ENCODE measurements at regions of chr2 and their contacts with region 1.

Region 1: GRCh38 chr2:27086090-27086723 is 365 bp upstream of the KHK start:
- DNase-seq: peak; percentile 96
- ATAC-seq: peak; percentile 84
- H3K4me3 ChIP-seq: peak overlapping the region; percentile 86
- H3K27ac ChIP-seq: no peak overlapping the region
- H3K4me1 ChIP-seq: peaks cover 19% of the 10 kb centered on the region; the same call in 1 of the 2 replicates
- H3K27me3 ChIP-seq: no peaks in the 10 kb centered on the region
- CTCF ChIP-seq: peak; percentile 66

Region 2: GRCh38 chr2:26959331-26959730 is 126.9 kb before region 1 on chr2:
- CTCF ChIA-PET with region 1: interaction called, 4 read pairs
- POLR2A ChIA-PET with region 1: no interaction called
- intact Hi-C with region 1: loop called (anchors 1 kb)
- DNase-seq: no peak
- ATAC-seq: no peak
- H3K4me3 ChIP-seq: no peak overlapping the region
- H3K27ac ChIP-seq: no peak overlapping the region
- H3K4me1 ChIP-seq: no peaks in the 10 kb centered on the region
- H3K27me3 ChIP-seq: peaks cover 21% of the 10 kb centered on the region; the same call in 1 of the 2 replicates
- CTCF ChIP-seq: no peak

Region 3: DNA sequence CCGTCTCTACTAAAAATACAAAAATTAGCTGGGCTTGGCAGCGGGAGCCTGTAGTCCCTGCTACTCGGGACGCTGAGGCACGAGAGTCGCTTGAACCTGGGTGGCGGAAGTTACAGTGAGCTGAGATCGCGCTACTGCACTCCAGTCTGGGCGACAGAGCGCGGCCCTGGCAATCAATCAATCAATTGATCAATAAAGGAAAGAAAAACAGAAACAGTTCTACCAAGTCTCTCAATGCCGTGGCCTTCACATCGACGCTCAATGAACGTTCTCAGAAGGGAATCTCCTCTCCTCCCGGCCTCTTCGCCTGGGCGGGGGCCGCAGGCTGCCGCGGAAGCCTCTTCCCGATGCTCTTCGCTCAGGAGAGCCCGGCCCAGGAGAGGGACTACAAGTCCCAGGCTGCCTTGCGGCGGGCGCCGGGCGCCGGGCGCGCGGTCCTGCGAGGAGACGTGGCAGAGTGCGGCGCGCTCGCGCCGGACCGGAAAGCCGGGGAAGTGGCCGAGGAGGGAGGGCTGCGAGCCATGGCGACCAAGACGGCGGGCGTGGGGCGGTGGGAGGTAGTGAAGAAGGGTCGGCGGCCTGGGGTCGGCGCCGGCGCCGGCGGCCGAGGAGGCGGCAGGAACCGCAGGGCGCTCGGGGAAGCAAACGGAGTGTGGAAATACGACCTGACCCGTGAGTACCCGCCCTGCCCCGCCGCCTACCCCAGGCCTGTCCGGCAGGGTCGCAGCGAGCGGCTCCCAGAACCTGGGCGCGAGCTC is 53.5 kb before region 1 on chr2 and contains the start of gene TMEM214:
- CTCF ChIA-PET with region 1: no interaction called
- POLR2A ChIA-PET with region 1: no interaction called
- intact Hi-C with region 1: loop called (anchors 1 kb)
- DNase-seq: peak; percentile 90
- ATAC-seq: peak; percentile 98
- H3K4me3 ChIP-seq: peak within 1 kb of the TSS; percentile 87
- H3K27ac ChIP-seq: no peak within 1 kb of the TSS; the same call in 1 of the 2 replicates
- H3K4me1 ChIP-seq: peaks cover 8% of the 10 kb centered on the region
- H3K27me3 ChIP-seq: no peaks in the 10 kb centered on the region
- CTCF ChIP-seq: no peak
- total RNA-seq, gene TMEM214: 43.0 and 56.1 TPM in 2 replicates

Region 4: DNA sequence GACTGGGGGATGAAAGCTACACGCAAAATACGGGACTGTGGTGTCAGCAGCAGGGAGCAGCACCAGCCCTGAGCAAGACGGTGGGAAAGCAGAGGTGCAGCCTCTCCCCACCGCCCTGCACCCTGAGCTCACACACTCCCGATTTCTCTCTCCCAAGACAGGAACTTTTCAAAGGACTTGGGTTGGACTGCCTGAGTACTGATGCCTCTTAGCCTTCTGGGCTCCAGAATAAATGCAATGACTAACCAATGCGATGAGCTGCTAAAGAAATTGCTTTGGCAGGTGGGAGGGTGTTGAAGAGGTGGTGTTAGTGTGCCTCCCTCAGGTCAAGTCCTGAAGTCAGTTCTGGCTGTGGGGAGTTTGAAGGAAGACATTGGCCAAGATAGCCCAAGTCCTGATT is 205.7 kb after region 1 on chr2:
- CTCF ChIA-PET with region 1: interaction called, 4 read pairs
- POLR2A ChIA-PET with region 1: interaction called, 39 read pairs
- intact Hi-C with region 1: no loop called
- DNase-seq: peak; percentile 48
- ATAC-seq: peak; percentile 11; the same call in 1 of the 2 replicates
- H3K4me3 ChIP-seq: no peak overlapping the region
- H3K27ac ChIP-seq: no peak overlapping the region
- H3K4me1 ChIP-seq: peaks cover 28% of the 10 kb centered on the region
- H3K27me3 ChIP-seq: no peaks in the 10 kb centered on the region
- CTCF ChIP-seq: peak; percentile 51